Right cardiac atrium (tissue), 5 donors: ENCODE measurements at regions of chr6 and their contacts with region 1.

Region 1: GRCh38 chr6:25263657-25264056 is 15.5 kb upstream of the CARMIL1 start:
- DNase-seq: no peak
- ATAC-seq: no peak
- H3K4me3 ChIP-seq: no peak overlapping the region
- H3K27ac ChIP-seq: no peak overlapping the region
- H3K4me1 ChIP-seq: no peaks in the 10 kb centered on the region
- H3K27me3 ChIP-seq: no peaks in the 10 kb centered on the region

Region 2: DNA sequence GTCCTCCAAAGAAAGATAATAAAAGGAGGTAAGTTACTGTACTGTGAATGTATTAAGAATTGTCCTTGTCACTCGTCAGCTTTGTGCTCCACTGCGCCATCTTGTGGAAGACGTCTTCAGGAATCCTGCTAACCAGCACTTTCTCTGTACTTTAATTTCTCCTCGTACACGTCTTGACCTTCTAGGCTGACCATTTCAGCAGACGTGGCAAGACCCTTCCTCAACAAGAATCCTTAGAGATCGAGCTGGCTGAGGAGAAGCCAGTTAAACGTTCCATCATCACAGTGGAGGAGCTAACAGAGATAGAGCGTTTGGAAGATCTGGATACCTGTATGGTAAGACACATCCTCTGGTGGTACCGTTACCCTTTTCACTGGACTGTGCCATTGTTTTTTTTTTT is 292.9 kb after region 1 on chr6:
- intact Hi-C with region 1: loop called in 1 of 4 experiments (anchors 10 kb)
- DNase-seq: peak; percentile 79 to 90 (median 80)
- ATAC-seq: peak; percentile 61 to 69
- H3K4me3 ChIP-seq: no peak overlapping the region
- H3K27ac ChIP-seq: no peak overlapping the region
- H3K4me1 ChIP-seq: no peaks in the 10 kb centered on the region
- H3K27me3 ChIP-seq: no peaks in the 10 kb centered on the region